HEK293 (cell line): ENCODE measurements at regions of chr16 and their contacts with region 1.

Region 1: DNA sequence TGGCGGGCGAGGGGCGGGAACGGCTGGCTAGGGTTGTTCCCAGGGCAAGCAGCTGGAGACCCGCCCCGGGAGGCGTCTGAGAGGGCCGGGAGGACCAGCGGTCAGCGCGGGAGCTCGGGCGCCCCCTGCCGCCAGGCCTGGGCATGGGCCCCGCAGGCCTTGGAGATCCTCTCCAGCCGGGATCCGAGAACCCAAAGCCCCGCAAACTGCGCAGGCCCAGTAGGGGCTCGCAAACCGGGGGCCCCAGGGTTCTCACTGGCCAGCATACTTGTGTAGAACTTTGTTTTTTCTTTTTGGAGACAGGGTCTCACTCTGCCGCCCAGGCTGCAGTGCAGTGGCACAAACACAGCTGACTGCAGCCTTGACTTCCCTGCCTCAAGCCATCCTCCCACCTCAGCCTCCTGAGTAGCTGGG is 20.8 kb upstream of the ZNF423 start:
- H3K4me3 ChIP-seq: no peak overlapping the region
- H3K27ac ChIP-seq: no peak overlapping the region
- H3K4me1 ChIP-seq: no peaks in the 10 kb centered on the region
- CTCF ChIP-seq: no peak

Region 2: DNA sequence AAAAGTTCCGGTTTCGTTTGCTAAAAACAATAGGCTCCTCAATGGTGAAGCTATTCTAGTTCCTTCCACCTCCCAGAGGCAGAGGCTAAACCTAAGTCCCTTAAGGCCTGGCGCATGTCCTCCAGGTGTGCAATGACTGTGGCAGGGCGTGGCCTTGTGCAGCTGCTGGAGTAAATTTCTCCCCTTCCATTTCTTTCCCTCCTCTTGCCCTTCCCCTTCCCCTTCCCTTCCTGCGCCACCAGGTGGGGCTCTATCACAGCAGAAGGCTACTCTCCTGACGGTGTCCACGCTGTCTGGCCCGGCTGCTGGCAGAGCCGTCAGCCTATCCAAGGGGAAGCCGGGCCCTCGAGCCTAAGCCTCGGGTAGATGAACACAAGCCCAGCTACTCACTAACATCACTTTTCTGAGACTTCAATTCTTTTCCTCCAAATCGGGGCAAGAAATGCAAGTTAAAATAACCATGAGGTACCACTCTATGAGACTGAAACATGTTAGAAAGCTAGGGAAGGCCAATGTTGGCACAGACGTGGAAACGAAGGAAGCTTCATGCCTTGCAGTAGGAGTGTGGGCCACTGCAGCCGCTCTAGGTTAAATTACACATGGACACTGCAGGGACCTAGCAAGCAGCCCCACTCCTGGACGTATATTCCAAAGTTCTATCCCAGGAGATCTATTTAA is 468.7 kb before region 1 on chr16:
- CTCF ChIA-PET with region 1: interaction called, 10 read pairs
- POLR2A ChIA-PET with region 1: no interaction called
- H3K4me3 ChIP-seq: no peak overlapping the region
- H3K27ac ChIP-seq: no peak overlapping the region
- H3K4me1 ChIP-seq: no peaks in the 10 kb centered on the region
- CTCF ChIP-seq: peak; percentile 92

Region 3: GRCh38 chr16:49725651-49726050 is 151.1 kb before region 1 on chr16:
- CTCF ChIA-PET with region 1: no interaction called
- POLR2A ChIA-PET with region 1: no interaction called
- H3K4me3 ChIP-seq: no peak overlapping the region
- H3K27ac ChIP-seq: no peak overlapping the region
- H3K4me1 ChIP-seq: no peaks in the 10 kb centered on the region
- CTCF ChIP-seq: no peak

Region 4: GRCh38 chr16:49788572-49788971 is 88.2 kb before region 1 on chr16:
- CTCF ChIA-PET with region 1: no interaction called
- POLR2A ChIA-PET with region 1: no interaction called
- H3K4me3 ChIP-seq: no peak overlapping the region
- H3K27ac ChIP-seq: no peak overlapping the region
- H3K4me1 ChIP-seq: no peaks in the 10 kb centered on the region
- CTCF ChIP-seq: no peak

Region 5: DNA sequence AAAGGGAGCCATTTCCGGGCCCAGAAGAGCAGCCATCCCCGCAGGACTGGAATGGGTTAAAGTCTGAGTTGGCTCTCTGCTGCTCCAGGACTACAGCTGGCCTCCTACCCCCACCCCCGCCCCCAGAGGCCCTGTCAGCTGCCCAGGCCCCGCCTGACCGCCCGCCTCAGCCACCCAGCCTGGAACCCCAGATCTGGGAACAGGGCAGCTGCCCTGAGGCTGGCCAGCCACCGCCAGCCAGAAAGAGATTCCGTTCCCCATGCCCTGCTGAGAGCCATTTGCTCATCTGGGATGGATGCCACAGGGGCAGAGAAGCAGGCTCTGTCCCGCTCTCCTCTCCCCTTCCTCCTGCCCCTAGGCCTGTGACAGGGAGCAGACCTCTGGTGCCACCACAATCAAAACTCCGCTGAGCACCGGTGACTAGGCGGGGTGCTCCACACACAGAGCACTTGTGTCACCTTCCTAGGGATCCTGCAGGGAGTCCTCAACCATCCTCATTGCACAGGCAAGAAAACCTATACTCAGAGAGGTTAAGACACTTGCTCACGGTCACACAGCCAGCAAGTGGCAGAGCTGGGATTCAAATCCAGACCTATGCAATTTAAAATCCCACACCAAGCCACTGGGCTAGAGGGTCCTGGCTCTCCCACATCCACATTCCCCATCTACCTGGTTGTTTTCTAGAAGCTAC is 64.9 kb before region 1 on chr16:
- CTCF ChIA-PET with region 1: no interaction called
- POLR2A ChIA-PET with region 1: no interaction called
- H3K4me3 ChIP-seq: no peak overlapping the region
- H3K27ac ChIP-seq: no peak overlapping the region
- H3K4me1 ChIP-seq: no peaks in the 10 kb centered on the region
- CTCF ChIP-seq: no peak

Region 6: DNA sequence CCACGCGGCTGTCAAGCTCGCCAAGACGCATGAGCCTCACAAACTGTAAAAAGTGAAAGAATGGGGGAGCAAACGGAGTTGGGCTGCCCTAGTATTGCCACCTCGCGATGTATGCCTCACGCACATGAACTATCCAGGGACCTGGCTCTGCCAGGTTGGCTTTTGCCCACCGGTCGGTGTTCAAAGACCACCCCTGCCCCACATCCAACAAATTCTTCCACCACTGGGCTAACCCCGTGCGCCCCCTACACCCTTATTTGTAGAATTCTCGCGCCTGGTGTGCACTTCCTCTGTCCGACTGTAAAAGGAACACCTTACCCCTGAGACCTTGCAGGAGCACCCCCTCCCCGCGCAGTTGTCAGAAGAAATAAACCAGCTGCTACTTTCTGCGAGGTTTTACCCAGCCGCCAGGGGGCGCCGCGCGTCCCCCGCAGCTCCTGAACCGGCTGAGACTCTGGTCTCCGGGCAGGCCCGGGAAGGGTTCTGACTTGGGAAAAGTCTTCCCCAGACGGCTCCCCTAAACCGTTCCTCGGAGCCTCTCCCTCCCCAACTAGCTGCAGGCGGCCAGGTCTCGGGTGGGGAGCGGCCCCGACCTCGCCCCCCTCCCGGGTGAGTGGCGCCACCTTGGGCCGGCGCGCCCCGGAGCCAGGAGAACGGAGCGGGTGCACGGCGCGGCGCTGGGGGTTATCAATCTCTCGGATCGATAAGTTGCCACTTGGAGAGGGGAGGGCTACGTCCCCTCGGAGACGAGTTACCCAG is 19.1 kb before region 1 on chr16:
- CTCF ChIA-PET with region 1: interaction called, 28 read pairs
- POLR2A ChIA-PET with region 1: interaction called, 3 read pairs
- H3K4me3 ChIP-seq: peak overlapping the region; percentile 9
- H3K27ac ChIP-seq: no peak overlapping the region; the same call in 1 of the 2 replicates
- H3K4me1 ChIP-seq: peaks cover 2% of the 10 kb centered on the region
- CTCF ChIP-seq: peak; percentile 92

Region 7: GRCh38 chr16:49866595-49867071 is 10.1 kb before region 1 on chr16:
- CTCF ChIA-PET with region 1: interaction called, 26 read pairs
- POLR2A ChIA-PET with region 1: no interaction called
- H3K4me3 ChIP-seq: no peak overlapping the region
- H3K27ac ChIP-seq: no peak overlapping the region
- H3K4me1 ChIP-seq: no peaks in the 10 kb centered on the region
- CTCF ChIP-seq: no peak

Region 8: DNA sequence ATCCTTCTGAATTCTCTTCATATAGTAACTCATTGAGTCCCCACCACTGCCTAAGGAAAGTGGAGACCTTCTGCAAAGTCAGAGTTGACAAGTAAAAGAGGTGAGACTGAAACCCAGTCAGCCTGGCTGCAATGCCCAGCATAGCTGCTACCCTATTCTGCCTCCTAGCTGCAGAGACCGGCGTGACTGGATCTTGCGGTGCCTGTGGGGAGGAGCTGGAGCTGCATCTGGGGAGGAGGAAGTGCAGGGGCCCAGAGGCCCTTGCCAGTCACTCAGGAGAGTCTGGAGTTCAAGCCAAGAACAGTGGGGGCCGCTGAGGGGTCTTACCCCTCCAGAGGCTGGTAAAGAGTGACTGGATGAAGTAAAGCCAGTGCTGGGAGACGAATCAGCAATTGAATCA is 14.2 kb after region 1 on chr16:
- CTCF ChIA-PET with region 1: interaction called, 20 read pairs
- POLR2A ChIA-PET with region 1: no interaction called
- H3K4me3 ChIP-seq: no peak overlapping the region
- H3K27ac ChIP-seq: no peak overlapping the region
- H3K4me1 ChIP-seq: no peaks in the 10 kb centered on the region
- CTCF ChIP-seq: no peak

Region 9: DNA sequence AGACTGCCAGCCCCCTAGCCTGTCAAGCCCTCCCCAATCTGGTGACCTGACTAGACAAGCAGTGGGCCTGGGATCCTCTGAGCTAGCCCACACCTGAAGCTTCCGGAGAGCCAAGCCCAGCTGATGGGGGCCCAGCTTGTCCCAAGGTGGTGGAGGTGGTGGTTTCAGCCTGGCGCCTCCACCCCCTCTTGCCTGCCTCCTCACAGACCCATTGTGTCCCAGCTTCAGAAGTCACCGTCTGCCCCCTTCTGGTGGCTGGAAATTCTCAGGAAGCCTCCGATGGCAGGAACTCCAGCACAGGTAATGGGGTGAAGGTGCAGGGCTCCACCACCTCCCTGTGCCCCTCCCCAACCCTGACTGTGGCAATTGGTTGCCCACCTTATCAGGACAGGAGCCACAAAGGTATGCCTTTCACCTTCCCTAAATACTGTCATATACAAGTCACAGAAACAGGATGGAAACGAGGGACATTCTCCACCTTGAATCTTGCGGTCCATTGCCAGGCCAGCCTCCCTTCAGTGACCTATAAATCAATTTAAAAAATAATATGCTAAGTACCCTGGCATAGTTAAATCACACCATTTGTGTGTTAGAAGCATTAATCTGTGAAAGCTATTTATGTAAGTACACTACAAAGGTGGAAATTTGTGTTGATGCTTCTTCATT is 45.2 kb after region 1 on chr16:
- CTCF ChIA-PET with region 1: interaction called, 13 read pairs
- POLR2A ChIA-PET with region 1: no interaction called
- H3K4me3 ChIP-seq: no peak overlapping the region
- H3K27ac ChIP-seq: no peak overlapping the region
- H3K4me1 ChIP-seq: no peaks in the 10 kb centered on the region
- CTCF ChIP-seq: peak; percentile 83